ENCODE measurements at regions of chr15 and their contacts with region 1.

Region 1: GRCh38 chr15:34969340-34970097 is at the start of gene AQR:
- DNase-seq: peak; percentile 87
- ATAC-seq: peak; percentile 98
- H3K4me3 ChIP-seq: peak within 1 kb of the TSS; percentile 81
- H3K27ac ChIP-seq: peak within 1 kb of the TSS; percentile 38
- H3K4me1 ChIP-seq: peaks cover 4% of the 10 kb centered on the region; the same call in 1 of the 2 replicates
- H3K27me3 ChIP-seq: no peaks in the 10 kb centered on the region
- CTCF ChIP-seq: peak; percentile 94 to 95 (median 95)
- EP300 ChIP-seq: no peak; a peak in 1 of 4 replicates
- POLR2A ChIP-seq: peak; percentile 93
- RAD21 ChIP-seq: peak; percentile 53
- polyA plus RNA-seq, gene AQR: 18.2 TPM

Region 2: GRCh38 chr15:34942363-34942762 is 27.2 kb before region 1 on chr15:
- CTCF ChIA-PET with region 1: interaction called, 11 read pairs
- POLR2A ChIA-PET with region 1: no interaction called
- RAD21 ChIA-PET with region 1: no interaction called
- SMC1A ChIA-PET with region 1: no interaction called
- in situ Hi-C with region 1: no loop called
- intact Hi-C with region 1: no loop called
- DNase-seq: no peak
- ATAC-seq: no peak
- H3K4me3 ChIP-seq: no peak overlapping the region
- H3K27ac ChIP-seq: no peak overlapping the region
- H3K4me1 ChIP-seq: no peaks in the 10 kb centered on the region
- H3K27me3 ChIP-seq: no peaks in the 10 kb centered on the region
- CTCF ChIP-seq: no peak
- EP300 ChIP-seq: no peak
- POLR2A ChIP-seq: no peak
- RAD21 ChIP-seq: no peak